ENCODE measurements at regions of chr15 and their contacts with region 1.

Region 1: GRCh38 chr15:23687143-23687470 is at the start of gene NDN:
- DNase-seq: peak; percentile 41
- H3K4me3 ChIP-seq: peak within 1 kb of the TSS; percentile 42 to 62 (median 50)
- H3K27ac ChIP-seq: peak within 1 kb of the TSS; percentile 52 to 63 (median 58)
- H3K4me1 ChIP-seq: no peaks in the 10 kb centered on the region
- H3K27me3 ChIP-seq: no peaks in the 10 kb centered on the region
- CTCF ChIP-seq: no peak
- EP300 ChIP-seq: no peak
- POLR2A ChIP-seq: peak; percentile 10
- total RNA-seq, gene NDN: 21.4 to 66.7 (median 31.1) TPM

Region 2: GRCh38 chr15:23447107-23447500 is 240.0 kb before region 1 on chr15 and contains the start of gene GOLGA6L2:
- in situ Hi-C with region 1: no loop called
- intact Hi-C with region 1: no loop called
- DNase-seq: no peak
- H3K4me3 ChIP-seq: no peak within 1 kb of the TSS
- H3K27ac ChIP-seq: no peak within 1 kb of the TSS
- H3K4me1 ChIP-seq: no peaks in the 10 kb centered on the region
- H3K27me3 ChIP-seq: no peaks in the 10 kb centered on the region
- CTCF ChIP-seq: no peak
- EP300 ChIP-seq: no peak
- POLR2A ChIP-seq: no peak
- total RNA-seq, gene GOLGA6L2: not detected

Region 3: GRCh38 chr15:23574742-23575141 is 112.4 kb before region 1 on chr15:
- in situ Hi-C with region 1: loop called in 1 of 4 experiments (anchors 25 kb)
- intact Hi-C with region 1: no loop called
- DNase-seq: no peak
- H3K4me3 ChIP-seq: no peak overlapping the region
- H3K27ac ChIP-seq: peak overlapping the region in 1 of 4 donors; percentile 31
- H3K4me1 ChIP-seq: peaks cover 0 to 14% (median 0%) of the 10 kb centered on the region in 4 donors
- H3K27me3 ChIP-seq: no peaks in the 10 kb centered on the region
- CTCF ChIP-seq: no peak
- EP300 ChIP-seq: no peak
- POLR2A ChIP-seq: no peak

Region 4: GRCh38 chr15:23634181-23634580 is 52.9 kb before region 1 on chr15:
- in situ Hi-C with region 1: no loop called
- intact Hi-C with region 1: no loop called
- DNase-seq: no peak
- H3K4me3 ChIP-seq: no peak overlapping the region
- H3K27ac ChIP-seq: no peak overlapping the region
- H3K4me1 ChIP-seq: no peaks in the 10 kb centered on the region
- H3K27me3 ChIP-seq: no peaks in the 10 kb centered on the region
- CTCF ChIP-seq: no peak
- EP300 ChIP-seq: no peak
- POLR2A ChIP-seq: no peak

Measured in transverse colon (tissue), 4 donors.